ENCODE measurements at regions of chr2 and their contacts with region 1.

Region 1: GRCh38 chr2:75403991-75404428 is 156.7 kb downstream of the EVA1A start:
- DNase-seq: no peak
- H3K4me3 ChIP-seq: no peak overlapping the region
- H3K27ac ChIP-seq: no peak overlapping the region
- H3K4me1 ChIP-seq: no peaks in the 10 kb centered on the region
- H3K27me3 ChIP-seq: peaks cover 3% of the 10 kb centered on the region
- CTCF ChIP-seq: peak; percentile 42 to 64 (median 58)

Region 2: GRCh38 chr2:74690571-74690970 is 713.4 kb before region 1 on chr2:
- intact Hi-C with region 1: loop called (anchors 10 kb)
- DNase-seq: no peak
- H3K4me3 ChIP-seq: no peak overlapping the region
- H3K27ac ChIP-seq: no peak overlapping the region
- H3K4me1 ChIP-seq: no peaks in the 10 kb centered on the region
- H3K27me3 ChIP-seq: no peaks in the 10 kb centered on the region
- CTCF ChIP-seq: peak; percentile 33 to 69 (median 36)

Region 3: GRCh38 chr2:74919827-74920226 is 484.2 kb before region 1 on chr2:
- intact Hi-C with region 1: loop called (anchors 5 kb)
- DNase-seq: peak in 1 of 2 donors; percentile 65
- H3K4me3 ChIP-seq: peak overlapping the region in 1 of 2 donors; percentile 54
- H3K27ac ChIP-seq: no peak overlapping the region
- H3K4me1 ChIP-seq: no peaks in the 10 kb centered on the region
- H3K27me3 ChIP-seq: no peaks in the 10 kb centered on the region
- CTCF ChIP-seq: peak; percentile 58 to 88 (median 73)

Region 4: GRCh38 chr2:75064691-75065396 is 339.2 kb before region 1 on chr2:
- intact Hi-C with region 1: loop called (anchors 10 kb)
- DNase-seq: peak in 1 of 2 donors; percentile 73
- H3K4me3 ChIP-seq: no peak overlapping the region
- H3K27ac ChIP-seq: no peak overlapping the region
- H3K4me1 ChIP-seq: no peaks in the 10 kb centered on the region
- H3K27me3 ChIP-seq: no peaks in the 10 kb centered on the region
- CTCF ChIP-seq: peak in 2 of 3 experiments; percentile 47 to 64

Region 5: GRCh38 chr2:75424936-75425619 is 21.1 kb after region 1 on chr2:
- intact Hi-C with region 1: no loop called
- DNase-seq: no peak
- H3K4me3 ChIP-seq: no peak overlapping the region
- H3K27ac ChIP-seq: no peak overlapping the region
- H3K4me1 ChIP-seq: no peaks in the 10 kb centered on the region
- H3K27me3 ChIP-seq: no peaks in the 10 kb centered on the region
- CTCF ChIP-seq: no peak

Measured in ascending aorta (tissue), 2 donors.